AG04449 (cell line): ENCODE measurements at regions of chr15 and their contacts with region 1.

Region 1: GRCh38 chr15:62060113-62060895 is at the start of gene VPS13C:
- DNase-seq: no peak
- H3K4me3 ChIP-seq: peak within 1 kb of the TSS; percentile 80
- CTCF ChIP-seq: peak; percentile 94

Region 2: GRCh38 chr15:61916104-61916503 is 144.2 kb before region 1 on chr15:
- CTCF ChIA-PET with region 1: no interaction called
- POLR2A ChIA-PET with region 1: no interaction called
- DNase-seq: peak; percentile 45
- H3K4me3 ChIP-seq: no peak overlapping the region
- CTCF ChIP-seq: no peak

Region 3: DNA sequence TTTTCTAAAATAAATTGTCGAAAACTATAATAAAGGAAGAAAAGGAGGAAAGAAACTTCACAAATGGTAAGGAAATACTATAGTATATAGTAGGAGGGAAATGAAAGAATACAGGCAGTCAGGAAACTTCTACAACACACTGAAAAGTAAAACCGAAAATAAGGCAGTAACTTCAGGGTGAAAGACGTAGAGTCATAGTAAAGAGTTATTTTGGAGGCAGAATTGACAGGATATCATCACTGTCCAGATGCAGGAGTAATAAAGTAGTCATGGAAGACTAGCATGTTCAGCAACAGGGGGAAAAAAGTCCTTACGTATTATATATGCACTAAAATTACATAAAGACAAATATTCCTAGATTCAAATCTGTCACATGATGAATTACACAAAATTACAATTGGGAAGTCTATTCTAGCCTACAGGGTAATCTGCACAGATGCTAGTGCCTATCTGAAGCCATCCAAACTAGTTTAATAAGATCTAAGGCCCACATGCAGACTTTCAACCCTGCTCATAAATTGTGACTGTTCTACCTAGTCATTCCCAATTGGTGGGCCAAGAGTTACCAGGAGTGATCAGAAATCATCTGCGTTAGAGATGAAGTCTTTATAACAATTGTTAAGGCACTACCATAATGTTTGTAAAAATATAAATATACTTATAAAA is 14.1 kb before region 1 on chr15:
- CTCF ChIA-PET with region 1: interaction called, 17 read pairs
- POLR2A ChIA-PET with region 1: no interaction called
- DNase-seq: no peak
- H3K4me3 ChIP-seq: no peak overlapping the region
- CTCF ChIP-seq: no peak